K562 (cell line): ENCODE measurements at regions of chr11 and their contacts with region 1.

Region 1: DNA sequence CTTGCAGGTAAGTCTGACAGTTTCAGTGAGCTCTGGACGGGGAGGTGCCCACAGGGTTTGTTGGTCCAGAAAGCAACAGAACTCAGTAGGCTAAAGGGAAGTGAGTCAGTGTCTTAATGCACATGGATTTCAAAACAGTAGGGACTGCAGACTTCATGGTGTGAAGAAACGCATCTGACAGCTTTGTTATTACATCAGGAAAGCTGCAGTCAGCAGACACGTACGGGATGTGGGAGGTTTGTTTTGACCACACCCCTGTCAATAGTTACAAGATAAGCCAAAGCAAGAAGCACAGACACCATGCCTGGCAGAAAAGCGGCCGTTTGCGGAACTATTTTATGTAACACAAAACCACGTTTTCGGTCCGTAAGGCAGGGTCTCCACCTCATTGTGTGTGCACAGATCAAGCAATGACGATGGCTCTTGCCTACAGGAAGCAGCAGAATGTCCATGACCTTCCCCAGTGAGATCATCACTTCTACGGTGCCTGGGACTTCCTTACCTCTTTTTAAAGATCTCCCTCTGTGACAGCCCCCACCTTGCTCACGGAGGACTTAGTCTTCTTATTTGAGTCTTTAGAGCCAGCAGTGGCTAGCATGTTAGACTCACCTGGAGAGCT is 58.2 kb upstream of the FTH1 start:
- DNase-seq: peak; percentile 83 to 93 (median 86)
- ATAC-seq: peak; percentile 94
- H3K4me3 ChIP-seq: peak overlapping the region; percentile 8; the same call in 1 of the 2 replicates
- H3K27ac ChIP-seq: peak overlapping the region; percentile 84
- H3K4me1 ChIP-seq: peaks cover 10 to 14% of the 10 kb centered on the region in 2 experiments
- H3K27me3 ChIP-seq: no peaks in the 10 kb centered on the region
- CTCF ChIP-seq: no peak; a peak in 1 of 6 replicates
- EP300 ChIP-seq: peak; percentile 96
- POLR2A ChIP-seq: no peak
- RAD21 ChIP-seq: peak; percentile 31 to 44

Region 2: GRCh38 chr11:62012832-62013461 is 12.6 kb before region 1 on chr11:
- CTCF ChIA-PET with region 1: no interaction called
- POLR2A ChIA-PET with region 1: interaction called, 10 read pairs
- in situ Hi-C with region 1: no loop called
- intact Hi-C with region 1: no loop called
- DNase-seq: no peak
- ATAC-seq: peak; percentile 23
- H3K4me3 ChIP-seq: no peak overlapping the region
- H3K27ac ChIP-seq: peak overlapping the region; percentile 37; the same call in 1 of the 3 replicates
- H3K4me1 ChIP-seq: peaks cover 29 to 35% of the 10 kb centered on the region in 2 experiments
- H3K27me3 ChIP-seq: no peaks in the 10 kb centered on the region; a peak in 1 of 5 replicates
- CTCF ChIP-seq: no peak
- EP300 ChIP-seq: no peak
- POLR2A ChIP-seq: no peak
- RAD21 ChIP-seq: no peak

Region 3: DNA sequence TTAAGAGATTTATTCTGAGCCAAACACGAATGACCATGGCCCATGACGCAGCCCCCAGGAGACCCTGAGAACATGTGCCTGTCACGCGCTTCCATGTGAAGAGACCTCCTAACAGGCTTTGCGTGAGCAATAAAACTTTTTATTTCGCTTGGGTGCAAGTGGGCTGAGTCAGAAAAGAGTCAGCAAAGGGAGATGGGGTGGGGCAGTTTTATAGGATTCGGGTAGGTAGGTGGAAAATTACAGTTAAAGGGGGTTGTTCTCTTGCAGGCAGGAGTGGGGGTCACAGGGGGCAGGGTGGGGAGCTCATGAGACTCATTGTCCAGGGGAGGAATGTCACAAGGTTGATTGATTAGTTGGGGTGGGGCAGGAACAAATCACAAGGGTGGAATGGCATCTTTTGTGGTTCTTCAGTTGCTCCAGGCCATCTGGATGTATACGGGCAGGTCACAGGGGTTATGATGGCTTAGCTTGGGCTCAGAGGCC is 19.1 kb after region 1 on chr11:
- CTCF ChIA-PET with region 1: no interaction called
- POLR2A ChIA-PET with region 1: interaction called, 5 read pairs
- in situ Hi-C with region 1: no loop called
- intact Hi-C with region 1: loop called (anchors 1 kb)
- DNase-seq: no peak
- ATAC-seq: no peak
- H3K4me3 ChIP-seq: no peak overlapping the region
- H3K27ac ChIP-seq: no peak overlapping the region
- H3K4me1 ChIP-seq: peaks cover 13 to 15% of the 10 kb centered on the region in 2 experiments
- H3K27me3 ChIP-seq: peaks cover 0 to 3% of the 10 kb centered on the region in 2 experiments; a peak in 1 of 5 replicates
- CTCF ChIP-seq: no peak
- EP300 ChIP-seq: no peak
- POLR2A ChIP-seq: no peak
- RAD21 ChIP-seq: no peak

Region 4: GRCh38 chr11:62054484-62055121 is 29.0 kb after region 1 on chr11:
- CTCF ChIA-PET with region 1: no interaction called
- POLR2A ChIA-PET with region 1: interaction called, 3 read pairs
- in situ Hi-C with region 1: no loop called
- intact Hi-C with region 1: loop called (anchors 1 kb)
- DNase-seq: peak in 2 of 4 experiments; percentile 58 to 81
- ATAC-seq: peak; percentile 87
- H3K4me3 ChIP-seq: no peak overlapping the region
- H3K27ac ChIP-seq: no peak overlapping the region
- H3K4me1 ChIP-seq: peaks cover 0 to 9% of the 10 kb centered on the region in 2 experiments; a peak in 2 of 5 replicates
- H3K27me3 ChIP-seq: no peaks in the 10 kb centered on the region
- CTCF ChIP-seq: peak; percentile 70 to 93 (median 73)
- EP300 ChIP-seq: peak; percentile 62
- POLR2A ChIP-seq: no peak
- RAD21 ChIP-seq: peak; percentile 91 to 96

Region 5: GRCh38 chr11:62108017-62108750 is 82.6 kb after region 1 on chr11:
- CTCF ChIA-PET with region 1: no interaction called
- POLR2A ChIA-PET with region 1: no interaction called
- in situ Hi-C with region 1: no loop called
- intact Hi-C with region 1: no loop called
- DNase-seq: peak; percentile 44 to 80 (median 48)
- ATAC-seq: peak; percentile 74
- H3K4me3 ChIP-seq: no peak overlapping the region
- H3K27ac ChIP-seq: no peak overlapping the region
- H3K4me1 ChIP-seq: peaks cover 7 to 16% of the 10 kb centered on the region in 2 experiments
- H3K27me3 ChIP-seq: no peaks in the 10 kb centered on the region
- CTCF ChIP-seq: peak; percentile 74 to 92 (median 79)
- EP300 ChIP-seq: no peak
- POLR2A ChIP-seq: no peak
- RAD21 ChIP-seq: peak; percentile 92

Region 6: DNA sequence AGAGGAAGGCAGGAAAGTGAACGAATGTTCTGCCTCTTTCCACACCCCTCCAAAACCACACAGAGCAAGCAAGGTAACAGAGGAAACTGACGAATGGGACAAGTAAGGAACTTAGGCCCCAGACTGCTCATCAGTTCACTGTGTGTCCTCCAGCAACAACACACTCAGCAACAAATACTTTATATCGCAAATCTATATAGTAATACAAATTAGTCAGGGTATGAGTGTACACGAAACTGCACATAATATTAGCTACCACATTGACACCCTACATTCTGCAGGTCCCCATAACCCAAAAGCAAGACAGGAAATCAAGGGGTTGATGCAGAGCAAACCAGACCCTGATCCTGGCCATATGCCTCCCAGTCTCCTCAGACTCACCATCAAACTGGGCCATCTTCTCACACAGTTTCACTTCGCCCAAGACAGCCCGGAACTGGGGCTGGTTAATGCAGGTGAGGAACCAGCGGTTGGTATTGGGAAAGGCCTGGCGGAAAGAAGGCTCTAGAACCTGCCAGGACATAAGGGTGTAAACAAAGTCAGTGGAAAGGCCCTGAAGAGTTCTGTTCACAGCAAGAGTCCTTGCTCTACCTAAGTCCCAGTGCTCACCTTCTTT is 541.5 kb after region 1 on chr11:
- CTCF ChIA-PET with region 1: no interaction called
- POLR2A ChIA-PET with region 1: no interaction called
- in situ Hi-C with region 1: no loop called
- intact Hi-C with region 1: no loop called
- DNase-seq: no peak
- ATAC-seq: no peak
- H3K4me3 ChIP-seq: no peak overlapping the region
- H3K27ac ChIP-seq: no peak overlapping the region; the same call in 2 of the 3 replicates
- H3K4me1 ChIP-seq: peaks cover 14 to 20% of the 10 kb centered on the region in 2 experiments; a peak in 4 of 5 replicates
- H3K27me3 ChIP-seq: no peaks in the 10 kb centered on the region
- CTCF ChIP-seq: no peak
- EP300 ChIP-seq: no peak
- POLR2A ChIP-seq: no peak
- RAD21 ChIP-seq: no peak